HEK293 (cell line): ENCODE measurements at regions of chr11 and their contacts with region 1.

Region 1: DNA sequence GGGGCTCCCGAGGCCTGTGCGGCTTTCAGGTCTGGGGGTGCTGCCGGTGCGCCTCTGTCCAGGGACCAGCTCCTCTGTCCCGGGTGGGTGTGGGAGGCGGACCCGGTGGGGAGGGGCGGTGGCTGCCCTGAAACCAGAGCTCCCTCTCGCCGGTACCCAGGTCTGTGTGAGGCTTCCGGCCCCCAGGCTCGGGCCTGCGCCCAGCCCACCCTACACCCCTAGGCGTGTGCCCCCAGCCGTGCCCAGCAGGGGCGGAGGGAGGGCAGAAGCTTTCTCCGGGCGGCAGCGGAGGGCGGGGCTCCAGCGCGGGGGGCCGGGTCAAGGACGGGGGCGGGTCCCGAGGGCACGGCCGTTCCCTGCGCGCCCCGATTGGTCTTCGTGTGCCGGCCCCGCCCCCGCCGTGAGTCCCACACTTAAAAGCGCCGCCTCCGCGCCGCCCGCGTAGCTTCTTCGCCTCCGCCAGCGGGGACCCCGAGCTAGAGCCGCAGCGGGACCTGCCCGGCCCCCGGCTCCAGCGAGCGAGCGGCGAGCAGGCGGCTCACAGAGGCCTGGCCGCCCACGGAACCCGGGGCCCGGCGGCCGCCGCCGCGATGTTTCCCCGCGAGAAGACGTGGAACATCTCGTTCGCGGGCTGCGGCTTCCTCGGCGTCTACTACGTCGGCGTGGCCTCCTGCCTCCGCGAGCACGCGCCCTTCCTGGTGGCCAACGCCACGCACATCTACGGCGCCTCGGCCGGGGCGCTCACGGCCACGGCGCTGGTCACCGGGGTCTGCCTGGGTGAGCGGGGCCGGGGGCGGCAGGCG is 616 bp downstream of the PNPLA2 start:
- H3K4me3 ChIP-seq: peak overlapping the region; percentile 94
- H3K27ac ChIP-seq: peak overlapping the region; percentile 81
- H3K4me1 ChIP-seq: 0 out of 2 replicates have a peak, but pooled peaks cover 3% of the 10 kb centered on the region
- CTCF ChIP-seq: no peak

Region 2: DNA sequence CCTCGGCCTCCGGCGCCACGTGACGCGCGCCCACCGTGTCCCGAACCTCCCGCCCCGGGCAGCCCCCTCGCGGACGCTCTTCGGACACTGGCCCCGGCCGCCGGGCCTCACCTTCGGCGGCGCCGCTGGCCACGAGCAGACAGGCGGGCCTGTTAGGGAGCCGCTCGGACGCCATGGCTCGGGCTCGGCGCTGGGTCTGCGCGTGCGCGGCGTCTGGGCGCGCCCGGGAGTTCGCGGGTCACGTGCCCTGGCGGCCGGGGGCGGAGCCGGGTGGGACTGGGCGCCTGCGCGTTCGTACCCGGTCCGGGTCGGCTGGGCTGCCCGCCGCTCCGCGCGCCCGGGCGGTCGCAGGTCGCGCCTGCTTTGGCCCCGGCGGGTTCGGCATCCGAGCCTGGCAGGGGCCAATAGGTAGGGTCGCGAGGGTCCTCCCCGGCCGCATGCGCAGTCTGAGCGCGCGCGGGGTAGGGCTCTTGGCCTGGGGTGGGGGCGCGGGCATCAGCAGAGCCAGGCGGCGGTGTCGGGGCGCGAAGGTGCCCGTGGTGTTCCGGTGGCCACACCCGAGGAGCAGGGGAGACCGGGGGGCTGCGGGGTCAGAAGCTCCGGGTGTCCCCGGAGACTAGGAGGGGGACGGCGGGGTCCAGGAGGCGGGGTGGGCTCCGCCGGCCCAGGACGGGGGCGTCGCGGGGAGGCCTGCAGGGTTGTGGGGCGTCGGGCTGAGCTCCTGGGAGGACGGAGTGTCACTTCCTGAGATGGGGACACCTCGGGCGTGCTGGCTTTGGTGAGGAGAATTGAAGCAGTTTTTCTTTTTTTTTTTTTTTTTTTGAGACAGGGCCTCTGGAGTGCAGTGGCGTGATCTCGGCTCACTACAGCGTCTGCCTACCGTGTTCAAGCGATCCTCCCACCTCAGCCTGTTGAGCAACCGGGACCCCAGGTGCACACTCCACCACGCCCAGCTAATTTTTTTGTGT is 41.8 kb before region 1 on chr11 and contains the start of gene GATD1:
- CTCF ChIA-PET with region 1: no interaction called
- POLR2A ChIA-PET with region 1: interaction called, 13 read pairs
- H3K4me3 ChIP-seq: peak within 1 kb of the TSS; percentile 88
- H3K27ac ChIP-seq: peak within 1 kb of the TSS; percentile 80; the same call in 1 of the 2 replicates
- H3K4me1 ChIP-seq: no peaks in the 10 kb centered on the region; the same call in 1 of the 2 replicates
- CTCF ChIP-seq: no peak

Region 3: DNA sequence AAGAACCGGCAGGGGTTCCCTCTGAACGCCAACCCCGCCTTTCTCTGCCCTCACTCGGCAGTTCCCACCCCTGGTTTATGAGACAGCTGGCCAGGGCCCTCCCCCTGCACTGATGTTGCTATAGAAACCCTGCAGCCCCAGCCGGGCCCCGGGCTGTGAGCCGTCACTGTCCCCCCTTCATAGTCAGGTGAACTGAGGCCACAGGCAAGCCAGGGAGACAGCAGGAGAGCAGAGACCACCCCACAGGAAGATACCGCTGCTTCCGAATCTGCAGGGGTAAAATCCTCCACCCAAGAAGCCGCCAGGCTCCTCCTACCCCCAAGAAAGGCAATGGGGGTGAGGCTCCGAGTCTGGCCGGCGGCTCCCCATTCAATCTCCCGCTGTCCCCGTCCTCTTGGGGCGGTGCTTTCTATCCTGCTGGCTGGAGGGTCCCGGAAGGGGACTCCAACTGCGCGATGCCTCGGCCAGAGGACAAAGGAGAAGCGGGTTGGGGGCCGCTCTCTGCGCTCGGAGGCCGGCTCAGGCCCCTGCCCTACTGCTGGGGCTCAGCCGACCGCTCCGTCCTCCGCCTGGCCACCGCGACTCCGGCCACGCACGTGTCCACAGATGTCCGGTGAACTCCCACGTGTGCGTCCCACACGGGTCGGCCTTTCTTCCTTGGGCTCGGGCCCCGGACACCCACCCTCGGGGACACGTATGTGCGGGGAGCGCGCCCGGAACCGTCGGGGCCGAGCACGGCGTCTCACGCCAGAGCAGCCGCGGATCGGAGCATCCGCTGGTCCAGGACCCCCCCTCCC is 21.8 kb before region 1 on chr11:
- CTCF ChIA-PET with region 1: no interaction called
- POLR2A ChIA-PET with region 1: interaction called, 10 read pairs
- H3K4me3 ChIP-seq: peak overlapping the region; percentile 90
- H3K27ac ChIP-seq: peak overlapping the region; percentile 74; the same call in 1 of the 2 replicates
- H3K4me1 ChIP-seq: peaks cover 6% of the 10 kb centered on the region
- CTCF ChIP-seq: no peak

Region 4: DNA sequence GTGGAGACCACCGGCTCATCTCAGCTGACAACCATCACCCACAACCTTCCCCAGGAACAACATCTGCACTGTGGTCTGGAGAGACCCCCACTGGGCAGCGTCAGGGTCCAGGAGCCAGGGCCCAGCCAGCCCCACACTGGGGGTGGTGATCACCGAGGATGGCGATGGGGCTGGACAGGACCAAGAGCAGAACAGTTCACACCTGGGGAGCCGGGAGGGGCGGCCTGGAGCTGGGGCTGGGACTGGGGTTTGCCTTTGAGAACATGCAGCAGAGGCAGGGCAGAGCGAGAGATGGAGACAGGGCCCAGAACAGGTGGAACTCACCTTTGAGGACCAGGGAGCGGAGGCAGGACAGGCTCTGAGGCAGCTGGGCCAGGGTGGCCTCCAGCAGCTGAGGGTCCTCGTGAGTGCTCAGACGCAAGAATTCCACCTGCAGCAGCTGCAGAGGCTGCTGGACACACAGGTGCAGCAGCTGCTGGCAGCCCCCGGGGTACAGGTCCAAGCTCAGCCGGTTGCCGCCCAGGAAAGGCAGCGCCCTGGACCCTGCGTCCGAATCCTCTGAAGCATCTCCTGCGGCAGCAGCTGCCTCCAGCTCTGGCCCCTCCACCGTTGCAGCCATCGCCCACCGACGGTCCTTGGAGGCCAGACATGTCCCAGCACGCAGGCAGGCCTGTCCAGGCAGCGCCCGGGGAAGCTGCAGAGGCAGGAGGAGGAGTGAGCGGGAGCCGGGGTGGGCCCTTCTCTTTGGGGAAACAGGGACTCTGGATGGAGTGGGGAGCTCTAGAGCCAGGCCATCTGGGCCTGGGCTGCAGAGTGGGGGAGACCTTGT is 15.3 kb before region 1 on chr11:
- CTCF ChIA-PET with region 1: interaction called, 3 read pairs
- POLR2A ChIA-PET with region 1: interaction called, 42 read pairs
- H3K4me3 ChIP-seq: peak overlapping the region; percentile 60
- H3K27ac ChIP-seq: peak overlapping the region; percentile 81
- H3K4me1 ChIP-seq: no peaks in the 10 kb centered on the region
- CTCF ChIP-seq: no peak

Region 5: GRCh38 chr11:832321-833113 is 13.2 kb after region 1 on chr11 and contains the start of gene CD151:
- CTCF ChIA-PET with region 1: interaction called, 4 read pairs
- POLR2A ChIA-PET with region 1: interaction called, 202 read pairs
- H3K4me3 ChIP-seq: peak within 1 kb of the TSS; percentile 70
- H3K27ac ChIP-seq: peak within 1 kb of the TSS; percentile 66; the same call in 1 of the 2 replicates
- H3K4me1 ChIP-seq: no peaks in the 10 kb centered on the region; the same call in 1 of the 2 replicates
- CTCF ChIP-seq: peak; percentile 27; the same call in 1 of the 2 replicates

Region 6: GRCh38 chr11:842370-843002 is 23.2 kb after region 1 on chr11 and contains the starts of genes POLR2L and TSPAN4:
- CTCF ChIA-PET with region 1: interaction called, 6 read pairs
- POLR2A ChIA-PET with region 1: interaction called, 202 read pairs
- H3K4me3 ChIP-seq: peak within 1 kb of the TSS; percentile 89
- H3K27ac ChIP-seq: peak within 1 kb of the TSS; percentile 93
- H3K4me1 ChIP-seq: 0 out of 2 replicates have a peak, but pooled peaks cover 4% of the 10 kb centered on the region
- CTCF ChIP-seq: no peak